ENCODE measurements at regions of chr11 and their contacts with region 1.

Region 1: GRCh38 chr11:128472128-128473089 is 114.9 kb downstream of the ETS1 start:
- DNase-seq: peak; percentile 84
- ATAC-seq: peak; percentile 63
- H3K4me3 Mint-ChIP-seq: peak overlapping the region; percentile 77
- H3K27ac Mint-ChIP-seq: peak overlapping the region; percentile 97
- H3K4me1 Mint-ChIP-seq: peaks cover 92% of the 10 kb centered on the region
- H3K27me3 Mint-ChIP-seq: no peaks in the 10 kb centered on the region
- CTCF ChIP-seq: no peak

Region 2: DNA sequence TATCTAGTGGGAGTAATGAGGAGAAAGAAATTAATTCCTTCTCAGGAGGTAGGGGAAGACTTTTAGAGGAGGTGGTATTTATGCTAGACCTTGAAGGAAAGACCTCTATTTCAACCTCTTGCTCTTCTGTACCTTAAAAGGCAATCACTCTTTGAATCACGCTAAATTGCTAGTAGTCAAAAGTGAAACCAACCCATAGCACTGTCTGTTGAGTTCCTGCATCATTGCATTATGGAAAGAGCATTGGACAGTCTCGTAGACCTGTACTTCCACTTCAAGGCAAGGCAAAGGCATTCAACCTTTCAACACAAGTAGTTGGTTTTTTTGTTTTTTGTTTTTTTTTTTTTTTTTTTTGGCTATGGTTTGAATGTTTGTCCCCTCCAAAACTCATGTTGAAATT is 655.4 kb before region 1 on chr11:
- CTCF ChIA-PET with region 1: no interaction called
- POLR2A ChIA-PET with region 1: no interaction called
- intact Hi-C with region 1: no loop called
- DNase-seq: no peak
- ATAC-seq: no peak
- H3K4me3 Mint-ChIP-seq: no peak overlapping the region
- H3K27ac Mint-ChIP-seq: no peak overlapping the region
- H3K4me1 Mint-ChIP-seq: no peaks in the 10 kb centered on the region
- H3K27me3 Mint-ChIP-seq: peaks cover 4% of the 10 kb centered on the region
- CTCF ChIP-seq: no peak

Region 3: GRCh38 chr11:128232588-128232987 is 239.8 kb before region 1 on chr11:
- CTCF ChIA-PET with region 1: no interaction called
- POLR2A ChIA-PET with region 1: no interaction called
- intact Hi-C with region 1: loop called (anchors 5 kb)
- DNase-seq: peak; percentile 84
- ATAC-seq: peak; percentile 81
- H3K4me3 Mint-ChIP-seq: no peak overlapping the region
- H3K27ac Mint-ChIP-seq: peak overlapping the region; percentile 79
- H3K4me1 Mint-ChIP-seq: peaks cover 58% of the 10 kb centered on the region
- H3K27me3 Mint-ChIP-seq: no peaks in the 10 kb centered on the region
- CTCF ChIP-seq: no peak

Region 4: DNA sequence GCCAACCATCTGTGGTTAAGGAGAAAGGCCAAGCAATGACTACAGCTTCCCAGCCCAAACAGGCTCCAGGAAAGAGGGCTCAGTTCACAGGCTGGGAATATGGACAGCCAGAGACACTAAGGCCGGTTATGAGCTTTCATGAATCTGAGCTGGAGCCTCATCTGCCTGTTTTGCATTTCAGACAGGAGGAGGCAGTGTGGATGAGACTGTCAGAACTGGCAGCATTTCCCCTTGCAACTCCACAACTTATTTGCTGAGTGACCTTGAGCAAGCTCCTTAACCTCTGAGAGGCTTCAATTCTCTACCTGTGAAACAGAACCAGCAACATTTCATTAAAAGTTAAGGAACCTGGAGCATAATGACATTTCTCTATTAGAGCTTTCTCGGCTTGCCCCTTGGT is 149.0 kb before region 1 on chr11:
- CTCF ChIA-PET with region 1: interaction called, 11 read pairs
- POLR2A ChIA-PET with region 1: interaction called, 8 read pairs
- intact Hi-C with region 1: loop called (anchors 2 kb)
- DNase-seq: peak; percentile 61
- ATAC-seq: no peak
- H3K4me3 Mint-ChIP-seq: peak overlapping the region; percentile 70
- H3K27ac Mint-ChIP-seq: peak overlapping the region; percentile 98
- H3K4me1 Mint-ChIP-seq: peaks cover 85% of the 10 kb centered on the region
- H3K27me3 Mint-ChIP-seq: no peaks in the 10 kb centered on the region
- CTCF ChIP-seq: peak; percentile 70

Region 5: DNA sequence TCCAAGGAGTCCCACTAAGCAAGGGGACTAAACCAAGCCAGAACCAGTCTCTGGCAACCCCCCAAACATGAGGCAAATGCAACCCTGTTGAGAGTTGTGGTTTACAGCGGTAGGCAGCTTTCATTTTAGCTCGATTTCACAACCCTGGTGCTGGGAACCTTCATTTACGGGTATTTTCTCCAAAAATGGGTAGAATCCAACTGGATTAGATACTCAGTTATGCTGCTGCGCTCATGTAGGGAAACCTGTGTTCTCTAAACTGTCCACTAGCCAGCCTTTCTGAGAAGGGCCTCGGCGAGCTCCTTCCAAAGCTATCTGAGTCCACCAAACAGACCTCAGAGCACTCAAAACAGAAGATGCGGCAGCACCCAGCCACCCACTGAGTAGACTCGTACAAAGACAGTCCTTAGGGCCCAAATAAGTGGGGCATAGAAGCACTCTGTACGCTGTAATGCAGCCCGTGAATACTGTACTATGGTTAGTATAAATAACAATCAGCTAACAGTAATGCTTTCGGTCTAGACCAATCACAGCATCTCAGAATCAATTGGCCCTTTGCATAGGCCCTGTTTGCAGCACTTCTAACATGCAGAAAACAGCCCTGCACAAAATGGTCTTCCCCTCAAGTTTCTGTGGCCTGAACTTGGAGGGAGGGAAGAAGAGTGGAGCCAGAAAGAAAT is 10.2 kb after region 1 on chr11:
- CTCF ChIA-PET with region 1: interaction called, 16 read pairs
- POLR2A ChIA-PET with region 1: interaction called, 1,082 read pairs
- intact Hi-C with region 1: no loop called
- DNase-seq: peak; percentile 79
- ATAC-seq: peak; percentile 66
- H3K4me3 Mint-ChIP-seq: peak overlapping the region; percentile 66
- H3K27ac Mint-ChIP-seq: peak overlapping the region; percentile 94
- H3K4me1 Mint-ChIP-seq: peaks cover 90% of the 10 kb centered on the region
- H3K27me3 Mint-ChIP-seq: no peaks in the 10 kb centered on the region
- CTCF ChIP-seq: no peak

Region 6: GRCh38 chr11:128506999-128507611 is 34.7 kb after region 1 on chr11:
- CTCF ChIA-PET with region 1: interaction called, 11 read pairs
- POLR2A ChIA-PET with region 1: interaction called, 1,082 read pairs
- intact Hi-C with region 1: loop called (anchors 5 kb)
- DNase-seq: peak; percentile 77
- ATAC-seq: peak; percentile 32
- H3K4me3 Mint-ChIP-seq: peak overlapping the region; percentile 95
- H3K27ac Mint-ChIP-seq: peak overlapping the region; percentile 96
- H3K4me1 Mint-ChIP-seq: peaks cover 86% of the 10 kb centered on the region
- H3K27me3 Mint-ChIP-seq: no peaks in the 10 kb centered on the region
- CTCF ChIP-seq: no peak